Activated naive CD4-positive, alpha-beta T cell treated with anti-CD3 and anti-CD28 coated beads, Interleukin-2, amount 10 ng/mL, durations not matched to agents 7 days and 5 days (primary cell): ENCODE measurements at regions of chr19 and their contacts with region 1.

Region 1: DNA sequence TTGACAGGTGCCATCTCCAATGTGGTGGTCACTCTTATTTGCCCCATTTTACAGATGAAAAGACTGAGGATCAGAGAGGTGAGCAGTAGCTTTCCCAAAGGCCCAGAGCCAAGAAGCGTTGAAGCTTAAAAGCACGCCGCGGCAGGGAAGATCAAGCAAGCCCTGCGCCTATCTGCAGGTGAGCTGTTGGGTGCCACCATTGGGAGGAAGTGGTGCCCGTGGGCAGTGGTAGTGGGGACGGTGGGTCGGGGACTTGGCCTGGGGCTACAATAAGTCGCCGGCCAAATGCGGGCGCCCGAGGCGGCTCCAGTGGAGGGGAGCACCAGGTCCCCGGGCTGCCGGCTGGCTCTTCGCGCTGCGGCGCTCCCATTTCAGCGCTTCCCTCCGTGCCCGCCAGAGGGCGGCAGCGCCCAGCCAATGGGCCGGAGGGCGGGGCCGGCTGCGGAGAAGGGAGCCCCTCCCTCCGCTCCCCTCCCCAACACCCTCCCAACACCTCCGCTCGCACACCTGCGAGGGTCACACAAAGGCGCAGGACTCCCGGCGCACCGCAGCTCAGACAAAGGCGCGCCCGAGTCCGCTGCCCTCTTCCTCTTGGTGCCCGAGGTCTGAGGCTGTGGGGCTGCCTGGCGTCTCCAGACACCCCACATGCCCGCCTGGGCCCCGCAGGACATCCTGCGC is 744 bp upstream of the POU2F2 start:
- DNase-seq: peak; percentile 84
- H3K4me3 Mint-ChIP-seq: peak overlapping the region; percentile 78
- H3K27ac Mint-ChIP-seq: peak overlapping the region; percentile 84
- H3K4me1 Mint-ChIP-seq: peaks cover 65% of the 10 kb centered on the region
- H3K27me3 Mint-ChIP-seq: peaks cover 4% of the 10 kb centered on the region

Region 2: GRCh38 chr19:42099336-42099925 is 33.6 kb before region 1 on chr19:
- CTCF ChIA-PET with region 1: no interaction called
- DNase-seq: no peak
- H3K4me3 Mint-ChIP-seq: no peak overlapping the region
- H3K27ac Mint-ChIP-seq: no peak overlapping the region
- H3K4me1 Mint-ChIP-seq: no peaks in the 10 kb centered on the region
- H3K27me3 Mint-ChIP-seq: no peaks in the 10 kb centered on the region

Region 3: GRCh38 chr19:42121656-42122069 is 11.3 kb before region 1 on chr19:
- CTCF ChIA-PET with region 1: interaction called, 11 read pairs
- DNase-seq: peak; percentile 76
- H3K4me3 Mint-ChIP-seq: peak overlapping the region; percentile 67
- H3K27ac Mint-ChIP-seq: peak overlapping the region; percentile 86
- H3K4me1 Mint-ChIP-seq: peaks cover 42% of the 10 kb centered on the region
- H3K27me3 Mint-ChIP-seq: no peaks in the 10 kb centered on the region

Region 4: DNA sequence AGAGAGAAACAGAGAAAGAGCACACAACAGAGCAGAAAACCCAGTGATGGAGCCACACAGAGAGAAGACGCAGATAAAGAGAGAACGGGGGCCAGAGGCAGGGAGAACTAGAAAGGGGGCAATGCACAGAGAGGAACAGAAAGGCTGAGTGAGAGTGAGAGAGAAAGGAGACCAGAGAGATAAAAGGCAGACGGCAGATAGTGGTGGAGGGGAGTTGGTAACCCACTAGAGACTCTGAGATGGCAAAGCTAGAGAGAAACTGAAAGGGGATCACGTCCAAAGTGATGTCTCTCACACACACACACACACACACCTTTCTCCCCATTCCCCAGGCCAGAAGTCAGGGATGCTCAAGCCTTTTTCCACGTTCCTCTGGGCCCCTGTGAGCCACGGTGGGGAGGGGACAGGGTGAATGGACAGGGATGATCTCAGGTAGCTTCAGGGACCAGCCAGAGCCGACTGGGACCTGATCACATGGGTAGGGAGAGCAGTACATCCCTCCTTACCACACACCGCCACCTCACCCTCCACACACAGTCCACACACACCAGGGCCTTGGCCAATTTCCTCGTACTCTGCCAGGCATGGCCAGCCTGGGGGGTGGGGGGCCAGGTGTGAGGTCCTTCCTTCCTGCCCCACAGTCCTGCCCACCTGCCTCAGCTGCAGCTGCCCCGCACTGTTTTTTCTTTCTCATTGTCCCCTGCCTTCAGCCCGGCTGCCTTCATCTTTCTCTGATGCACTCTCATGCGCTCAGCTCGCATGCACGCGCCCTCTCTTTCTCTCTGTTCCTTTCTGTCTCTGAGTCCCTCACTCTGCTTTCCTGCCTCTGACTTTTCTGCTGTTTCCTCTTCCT is 21.7 kb after region 1 on chr19:
- CTCF ChIA-PET with region 1: no interaction called
- DNase-seq: peak; percentile 27
- H3K4me3 Mint-ChIP-seq: no peak overlapping the region
- H3K27ac Mint-ChIP-seq: no peak overlapping the region
- H3K4me1 Mint-ChIP-seq: peaks cover 19% of the 10 kb centered on the region
- H3K27me3 Mint-ChIP-seq: peaks cover 72% of the 10 kb centered on the region

Region 5: DNA sequence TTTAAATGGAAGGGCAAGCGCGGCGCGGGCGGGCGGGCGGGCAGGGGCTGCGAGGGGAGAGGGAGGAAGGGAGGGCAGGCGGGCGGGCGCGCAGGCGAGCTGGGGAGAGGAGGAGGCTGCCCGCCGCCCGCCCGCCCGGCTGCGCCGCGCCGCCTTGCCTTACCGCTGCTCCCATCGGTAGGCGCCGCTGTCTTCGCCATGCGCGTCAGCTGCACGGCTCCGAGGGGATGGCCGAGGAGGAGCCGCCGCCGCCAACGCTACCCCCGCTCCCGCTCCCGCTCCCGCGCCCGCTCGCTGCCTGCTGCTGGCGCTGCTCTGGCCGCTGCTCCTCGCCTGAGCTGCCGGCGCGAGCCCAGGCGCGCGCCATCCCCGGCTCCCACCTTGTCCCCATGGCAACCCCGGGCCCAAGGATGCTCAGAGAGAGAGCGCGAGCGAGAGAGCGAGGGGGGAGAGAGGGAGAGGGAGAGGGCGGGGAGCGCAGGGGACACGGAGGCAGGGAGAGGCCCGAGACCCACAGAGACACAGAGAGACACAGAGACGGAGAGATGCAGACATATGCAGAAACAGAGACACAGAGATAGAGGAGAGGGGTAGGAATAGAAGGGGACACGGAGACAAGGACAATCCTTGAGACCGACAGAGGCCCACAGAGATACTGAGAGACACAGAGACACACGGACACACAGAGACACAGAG is 44.1 kb after region 1 on chr19:
- CTCF ChIA-PET with region 1: interaction called, 15 read pairs
- DNase-seq: peak; percentile 86
- H3K4me3 Mint-ChIP-seq: no peak overlapping the region
- H3K27ac Mint-ChIP-seq: no peak overlapping the region
- H3K4me1 Mint-ChIP-seq: peaks cover 19% of the 10 kb centered on the region
- H3K27me3 Mint-ChIP-seq: peaks cover 43% of the 10 kb centered on the region

Region 6: DNA sequence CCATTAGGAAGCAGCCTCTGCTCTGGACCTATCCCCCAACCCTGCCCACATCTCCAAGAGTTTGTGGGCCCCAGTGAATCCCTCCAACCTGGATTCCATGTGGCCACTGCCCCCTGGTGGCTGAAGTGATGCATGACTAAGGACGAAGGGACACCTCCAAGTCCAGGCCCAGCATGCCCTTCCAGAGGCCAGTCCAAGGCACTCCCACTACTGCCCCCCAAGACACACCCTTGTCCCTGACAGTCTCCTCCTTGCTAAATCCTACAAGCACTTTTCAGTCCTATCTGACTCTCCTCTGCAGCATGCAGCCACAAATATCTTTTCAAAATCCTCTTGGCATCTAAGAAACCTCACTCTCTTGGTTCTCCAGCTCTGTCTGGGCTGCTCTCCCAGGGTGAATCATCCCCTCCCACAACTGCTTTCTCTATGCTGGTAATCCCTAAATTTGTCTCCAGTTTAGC is 51.4 kb after region 1 on chr19:
- CTCF ChIA-PET with region 1: interaction called, 15 read pairs
- DNase-seq: peak; percentile 78
- H3K4me3 Mint-ChIP-seq: no peak overlapping the region
- H3K27ac Mint-ChIP-seq: peak overlapping the region; percentile 60
- H3K4me1 Mint-ChIP-seq: peaks cover 52% of the 10 kb centered on the region
- H3K27me3 Mint-ChIP-seq: peaks cover 25% of the 10 kb centered on the region